Right ventricle myocardium inferior (tissue), 1 donor: ENCODE measurements at regions of chr10 and their contacts with region 1.

Region 1: DNA sequence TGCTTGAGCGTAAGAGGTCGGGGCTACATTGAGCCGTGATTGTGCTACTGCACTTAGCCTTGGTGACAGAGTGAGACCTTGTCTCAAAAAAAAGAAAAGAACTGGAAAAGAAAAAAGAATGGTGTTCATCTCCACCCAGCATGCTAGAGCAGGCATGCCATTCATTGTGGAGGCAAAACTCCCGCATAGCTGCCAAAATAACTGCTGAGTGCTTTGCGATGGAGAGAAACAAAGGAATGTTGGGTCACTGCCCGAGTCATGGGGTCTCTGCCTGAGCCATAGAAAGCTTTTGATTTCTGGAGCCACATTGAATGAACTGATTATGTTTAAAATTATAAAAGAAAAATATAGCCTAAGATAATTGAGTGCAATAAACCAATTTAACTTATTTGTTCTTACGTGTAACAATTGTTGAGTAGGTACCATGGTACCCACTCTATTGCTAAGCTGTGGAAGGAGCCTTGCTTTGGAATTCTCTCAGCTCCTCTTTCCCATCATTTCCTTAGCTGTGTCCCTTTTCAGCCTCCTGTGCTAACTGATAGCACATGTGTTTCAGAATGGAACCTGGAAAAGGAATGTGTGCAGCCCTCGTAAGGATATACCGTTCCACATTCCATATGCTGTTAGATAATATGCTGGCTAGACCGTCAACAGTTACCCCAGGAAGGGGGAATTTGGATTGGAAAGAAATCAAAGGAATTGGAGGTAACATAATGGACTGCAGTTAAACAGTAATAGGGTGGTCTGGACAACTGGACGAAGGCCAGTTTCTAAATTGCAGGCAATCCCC is 99.0 kb downstream of the KIAA1217 start:
- DNase-seq: no peak
- ATAC-seq: peak; percentile 75

Region 2: DNA sequence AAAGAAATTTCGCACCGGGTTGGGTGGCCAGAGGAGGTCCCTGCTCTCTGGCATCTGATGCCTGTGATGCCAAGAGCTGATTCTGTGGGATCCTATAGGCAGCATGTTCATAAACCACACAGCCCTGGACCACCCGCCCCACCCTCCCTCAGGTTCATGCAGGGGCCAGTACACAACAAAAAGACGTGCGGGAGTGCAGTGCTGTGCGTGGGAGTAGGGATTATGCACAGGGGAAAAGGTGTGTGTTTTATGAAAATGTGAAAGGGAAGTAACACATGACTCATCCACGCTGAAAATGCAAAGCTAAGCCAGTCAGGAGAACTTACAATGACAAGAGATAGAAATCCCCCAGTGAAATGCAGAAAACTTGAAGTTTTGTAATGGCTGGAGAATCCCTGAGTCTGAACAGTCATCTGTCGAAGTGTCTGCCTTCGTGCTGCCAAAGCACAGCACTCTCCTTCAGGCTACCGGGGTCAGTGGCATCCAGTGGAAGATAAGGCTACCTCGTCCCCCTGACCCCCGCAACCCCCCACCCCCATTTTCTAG is 97.9 kb before region 1 on chr10:
- intact Hi-C with region 1: loop called (anchors 5 kb)
- DNase-seq: no peak
- ATAC-seq: peak; percentile 9

Region 3: DNA sequence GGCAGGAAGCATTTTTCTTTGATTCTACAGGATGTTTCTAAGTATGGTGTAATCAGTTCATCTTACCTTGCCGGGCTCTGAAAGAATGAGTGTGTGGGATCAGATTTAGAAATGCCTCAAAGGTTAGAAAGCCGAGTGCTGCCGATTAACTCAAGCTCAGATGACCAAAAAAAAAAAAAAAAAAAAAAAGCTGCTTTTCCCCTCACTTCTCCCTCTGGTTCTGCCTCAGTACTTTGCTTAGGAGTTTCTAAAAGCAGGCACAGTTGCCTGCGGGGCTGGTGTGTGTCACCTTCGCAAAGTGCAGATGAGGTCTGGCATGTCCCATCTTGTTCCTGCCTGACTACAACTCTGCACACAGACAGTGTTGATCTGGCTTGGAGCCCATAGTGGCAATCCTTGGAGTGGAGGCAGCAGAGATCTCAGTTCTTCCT is 52.0 kb before region 1 on chr10:
- intact Hi-C with region 1: loop called (anchors 5 kb)
- DNase-seq: peak; percentile 66
- ATAC-seq: peak; percentile 83

Region 4: GRCh38 chr10:24277771-24278170 is 30.1 kb before region 1 on chr10:
- intact Hi-C with region 1: no loop called
- DNase-seq: no peak
- ATAC-seq: peak; percentile 85

Region 5: GRCh38 chr10:24344279-24344678 is 36.4 kb after region 1 on chr10:
- intact Hi-C with region 1: loop called (anchors 5 kb)
- DNase-seq: no peak
- ATAC-seq: no peak

Region 6: GRCh38 chr10:24737001-24737400 is 429.1 kb after region 1 on chr10:
- intact Hi-C with region 1: no loop called
- DNase-seq: no peak
- ATAC-seq: no peak